ENCODE measurements at regions of chr19 and their contacts with region 1.

Region 1: GRCh38 chr19:34145741-34146202 is 26.5 kb upstream of the LSM14A start:
- DNase-seq: peak; percentile 65
- H3K4me3 ChIP-seq: no peak overlapping the region
- H3K27ac ChIP-seq: no peak overlapping the region
- H3K4me1 ChIP-seq: no peaks in the 10 kb centered on the region
- H3K27me3 ChIP-seq: no peaks in the 10 kb centered on the region
- CTCF ChIP-seq: peak; percentile 68 to 71
- POLR2A ChIP-seq: no peak

Region 2: GRCh38 chr19:34041925-34042521 is 103.7 kb before region 1 on chr19:
- CTCF ChIA-PET with region 1: interaction called, 66 read pairs
- POLR2A ChIA-PET with region 1: no interaction called
- dilution Hi-C with region 1: no loop called
- intact Hi-C with region 1: loop called (anchors 1 kb)
- DNase-seq: peak; percentile 41
- H3K4me3 ChIP-seq: no peak overlapping the region
- H3K27ac ChIP-seq: no peak overlapping the region
- H3K4me1 ChIP-seq: no peaks in the 10 kb centered on the region
- H3K27me3 ChIP-seq: no peaks in the 10 kb centered on the region
- CTCF ChIP-seq: peak; percentile 96
- POLR2A ChIP-seq: no peak

Region 3: GRCh38 chr19:34128558-34129250 is 17.1 kb before region 1 on chr19:
- CTCF ChIA-PET with region 1: interaction called, 30 read pairs
- POLR2A ChIA-PET with region 1: no interaction called
- dilution Hi-C with region 1: no loop called
- intact Hi-C with region 1: no loop called
- DNase-seq: no peak
- H3K4me3 ChIP-seq: no peak overlapping the region
- H3K27ac ChIP-seq: no peak overlapping the region
- H3K4me1 ChIP-seq: no peaks in the 10 kb centered on the region
- H3K27me3 ChIP-seq: no peaks in the 10 kb centered on the region
- CTCF ChIP-seq: no peak
- POLR2A ChIP-seq: no peak